ENCODE measurements at regions of chr20 and their contacts with region 1.

Region 1: DNA sequence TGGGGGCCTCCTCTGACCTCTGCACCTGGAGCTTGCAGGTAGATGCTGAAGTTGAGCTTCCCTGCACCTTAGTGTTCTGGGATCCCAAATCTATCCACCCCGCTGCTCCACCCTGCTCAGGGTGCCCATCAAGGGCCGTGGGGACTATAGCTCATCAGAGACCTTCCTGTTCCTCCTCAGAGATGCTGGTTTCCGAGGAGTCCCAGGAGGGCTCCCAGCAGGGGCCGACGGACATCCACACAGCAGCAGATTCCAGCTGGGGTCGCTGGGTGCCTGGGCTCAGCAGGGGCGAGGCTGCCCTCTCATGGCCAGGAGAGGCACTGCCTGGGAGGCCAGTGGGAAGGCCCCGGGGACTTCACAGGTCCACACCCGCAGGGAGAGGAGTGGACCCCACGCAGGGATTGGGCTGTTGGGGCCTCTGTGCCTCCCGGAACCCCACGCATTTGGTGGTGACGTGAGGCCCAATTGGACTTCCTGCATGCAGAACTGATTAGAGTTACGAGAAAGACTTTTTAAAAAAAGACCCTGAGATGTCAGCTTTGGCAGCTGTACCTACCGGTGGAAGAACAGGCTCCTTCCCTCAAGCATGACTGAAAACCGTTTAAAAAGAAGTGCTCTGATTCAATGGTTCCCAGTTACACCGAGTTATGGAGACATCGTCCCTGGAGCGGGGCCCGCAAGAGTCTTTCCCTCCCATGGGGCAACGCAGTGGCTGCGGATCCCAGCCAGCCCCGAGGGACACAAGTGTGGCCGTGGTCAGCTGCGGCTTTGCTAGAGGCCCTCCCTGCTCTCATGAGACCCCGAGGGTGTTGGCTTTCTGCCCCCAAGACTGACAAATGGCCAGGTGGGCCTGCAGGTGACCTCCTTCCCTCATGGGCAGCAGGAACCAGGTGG is 25.3 kb upstream of the SLCO4A1 start:
- DNase-seq: peak; percentile 82 to 87 (median 86)
- ATAC-seq: peak; percentile 100
- H3K4me3 ChIP-seq: no peak overlapping the region
- H3K27ac ChIP-seq: no peak overlapping the region
- H3K4me1 ChIP-seq: peaks cover 0 to 44% of the 10 kb centered on the region in 2 experiments; a peak in 2 of 5 replicates
- H3K27me3 ChIP-seq: peaks cover 8 to 21% of the 10 kb centered on the region in 2 experiments
- CTCF ChIP-seq: peak; percentile 96 to 98 (median 96)
- EP300 ChIP-seq: no peak
- POLR2A ChIP-seq: no peak
- RAD21 ChIP-seq: peak; percentile 91 to 98

Region 2: DNA sequence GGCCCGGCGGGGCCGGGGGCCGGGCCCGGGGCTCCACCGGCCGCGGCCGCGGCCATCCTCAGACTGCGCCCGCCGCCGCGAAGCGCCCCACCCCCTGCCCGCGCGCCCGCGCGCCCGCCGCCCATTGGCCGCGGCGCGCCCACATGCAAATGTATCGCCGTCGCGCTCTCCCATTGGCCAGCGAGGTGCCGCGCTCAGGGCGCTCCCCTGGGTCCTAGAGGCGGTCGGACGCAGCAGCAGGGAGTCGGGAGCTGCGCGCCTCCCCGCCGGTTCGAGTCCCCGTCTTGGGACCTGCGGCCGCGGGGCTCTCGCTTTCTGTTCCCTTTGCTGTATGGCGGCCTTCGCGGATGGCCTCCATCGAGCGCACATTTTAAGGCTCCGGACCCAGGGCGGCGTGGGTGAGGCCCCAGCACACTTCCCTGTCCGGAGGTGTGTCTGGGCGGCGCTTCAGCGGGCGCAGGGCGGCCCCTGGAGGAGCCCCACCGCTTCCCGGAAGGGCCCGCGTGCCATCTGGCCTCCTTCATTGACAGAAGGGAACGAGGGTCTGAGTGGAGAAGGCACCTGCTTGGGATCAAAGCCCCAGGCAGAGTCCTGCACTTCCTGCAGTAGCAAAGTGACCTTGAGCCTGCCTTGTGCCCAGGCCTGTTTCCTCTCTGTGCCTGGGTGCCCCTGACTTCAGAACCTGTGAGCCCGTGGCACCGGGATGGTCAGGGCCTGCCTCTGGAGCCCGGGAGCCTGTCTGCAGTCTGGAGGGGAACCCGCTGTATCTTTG is 209.6 kb before region 1 on chr20 and contains the start of gene CABLES2:
- CTCF ChIA-PET with region 1: no interaction called
- POLR2A ChIA-PET with region 1: no interaction called
- in situ Hi-C with region 1: loop called (anchors 10 kb)
- intact Hi-C with region 1: loop called (anchors 2 kb)
- DNase-seq: peak; percentile 95 to 96 (median 96)
- ATAC-seq: peak; percentile 94
- H3K4me3 ChIP-seq: peak within 1 kb of the TSS; percentile 58
- H3K27ac ChIP-seq: peak within 1 kb of the TSS; percentile 65
- H3K4me1 ChIP-seq: peaks cover 17 to 88% of the 10 kb centered on the region in 2 experiments
- H3K27me3 ChIP-seq: no peaks in the 10 kb centered on the region
- CTCF ChIP-seq: peak in 2 of 3 experiments; percentile 14 to 36; a peak in 2 of 6 replicates
- EP300 ChIP-seq: no peak
- POLR2A ChIP-seq: peak; percentile 52; the same call in 1 of the 2 replicates
- RAD21 ChIP-seq: peak in 1 of 2 experiments; percentile 44; a peak in 1 of 4 replicates
- polyA plus RNA-seq, gene CABLES2: 0.46 to 0.72 TPM

Region 3: GRCh38 chr20:62516345-62516744 is 100.6 kb before region 1 on chr20:
- CTCF ChIA-PET with region 1: interaction called, 10 read pairs
- POLR2A ChIA-PET with region 1: interaction called, 4 read pairs
- in situ Hi-C with region 1: no loop called
- intact Hi-C with region 1: loop called (anchors 5 kb)
- DNase-seq: peak; percentile 72 to 78 (median 76)
- ATAC-seq: peak; percentile 92
- H3K4me3 ChIP-seq: no peak overlapping the region
- H3K27ac ChIP-seq: no peak overlapping the region
- H3K4me1 ChIP-seq: peaks cover 0 to 77% of the 10 kb centered on the region in 2 experiments; a peak in 3 of 5 replicates
- H3K27me3 ChIP-seq: peaks cover 18 to 41% of the 10 kb centered on the region in 2 experiments; a peak in 4 of 5 replicates
- CTCF ChIP-seq: peak; percentile 78 to 91 (median 79)
- EP300 ChIP-seq: no peak
- POLR2A ChIP-seq: no peak
- RAD21 ChIP-seq: peak; percentile 70 to 82

Region 4: DNA sequence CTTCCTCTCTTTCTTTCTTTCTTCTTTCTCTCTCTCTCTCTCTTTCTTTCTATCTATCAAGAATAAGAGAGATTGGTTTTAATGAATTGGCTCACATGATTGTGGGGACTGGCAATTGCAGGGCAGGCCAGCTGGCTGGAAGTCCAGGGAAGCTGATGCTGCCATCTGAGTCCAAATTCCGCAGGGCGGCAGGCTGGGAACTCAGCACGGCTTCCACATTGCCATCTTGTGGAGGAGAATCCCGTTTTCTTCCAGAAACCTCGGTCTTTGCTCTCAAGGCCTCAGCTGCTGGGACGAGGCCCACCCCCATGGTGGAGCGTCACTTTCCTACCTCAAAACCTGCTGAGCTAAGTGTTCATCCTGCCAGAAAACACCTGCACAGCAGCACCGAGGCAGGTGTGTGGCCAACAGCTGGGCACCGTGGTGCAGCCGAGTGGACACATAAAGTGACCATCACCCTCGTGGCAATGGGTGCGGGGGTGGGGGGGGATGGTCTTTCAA is 33.5 kb before region 1 on chr20:
- CTCF ChIA-PET with region 1: no interaction called
- POLR2A ChIA-PET with region 1: no interaction called
- in situ Hi-C with region 1: no loop called
- intact Hi-C with region 1: loop called (anchors 2 kb)
- DNase-seq: peak in 1 of 4 experiments; percentile 18
- ATAC-seq: no peak
- H3K4me3 ChIP-seq: no peak overlapping the region
- H3K27ac ChIP-seq: no peak overlapping the region
- H3K4me1 ChIP-seq: peaks cover 0 to 21% of the 10 kb centered on the region in 2 experiments; a peak in 2 of 5 replicates
- H3K27me3 ChIP-seq: peaks cover 16 to 80% of the 10 kb centered on the region in 2 experiments; a peak in 4 of 5 replicates
- CTCF ChIP-seq: peak in 2 of 3 experiments; percentile 37; a peak in 3 of 6 replicates
- EP300 ChIP-seq: no peak
- POLR2A ChIP-seq: no peak
- RAD21 ChIP-seq: peak in 1 of 2 experiments; percentile 40; a peak in 2 of 4 replicates

Measured in K562 (cell line).